ENCODE measurements at regions of chr17 and their contacts with region 1.

Region 1: DNA sequence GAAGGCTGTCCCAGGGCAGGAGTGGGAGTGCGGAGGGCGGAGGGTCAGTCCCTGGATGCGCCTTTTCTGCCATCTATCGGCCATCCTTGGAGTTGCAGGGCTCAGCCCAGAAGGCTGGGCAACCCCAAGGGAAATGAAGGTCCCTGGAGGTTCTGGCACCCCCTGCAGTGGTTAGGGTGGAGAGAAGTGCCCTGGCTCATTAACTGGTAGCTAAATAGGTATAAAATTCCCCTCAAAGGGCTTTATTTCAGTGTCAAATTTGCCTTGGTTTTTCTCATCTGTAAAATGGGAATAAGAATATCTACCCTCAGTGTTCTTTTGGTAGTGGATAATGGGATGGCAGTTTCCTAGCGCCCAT is 22.4 kb downstream of the C17orf75 start:
- DNase-seq: peak; percentile 69 to 87 (median 85)
- ATAC-seq: peak; percentile 91
- H3K4me3 ChIP-seq: no peak overlapping the region
- H3K4me1 ChIP-seq: no peaks in the 10 kb centered on the region
- CTCF ChIP-seq: peak; percentile 79

Region 2: GRCh38 chr17:32253117-32253611 is 66.4 kb before region 1 on chr17:
- intact Hi-C with region 1: loop called in 1 of 2 experiments (anchors 2 kb)
- DNase-seq: peak in 2 of 3 donors; percentile 79 to 89
- ATAC-seq: peak; percentile 95
- H3K4me3 ChIP-seq: no peak overlapping the region
- H3K4me1 ChIP-seq: peaks cover 6% of the 10 kb centered on the region
- CTCF ChIP-seq: peak; percentile 92

Region 3: GRCh38 chr17:32265192-32265923 is 54.2 kb before region 1 on chr17 and contains the start of gene RHBDL3:
- intact Hi-C with region 1: loop called in 1 of 2 experiments (anchors 5 kb)
- DNase-seq: peak in 2 of 3 donors; percentile 24 to 49
- ATAC-seq: peak; percentile 46
- H3K4me3 ChIP-seq: no peak within 1 kb of the TSS
- H3K4me1 ChIP-seq: peaks cover 21% of the 10 kb centered on the region
- CTCF ChIP-seq: no peak
- total RNA-seq, gene RHBDL3: 0.52 to 2.3 (median 1.3) TPM